Sciatic nerve (tissue), 2 donors: ENCODE measurements at regions of chr20 and their contacts with region 1.

Region 1: GRCh38 chr20:64077876-64078551 is 1.3 kb downstream of the RGS19 start:
- DNase-seq: no peak
- ATAC-seq: no peak

Region 2: DNA sequence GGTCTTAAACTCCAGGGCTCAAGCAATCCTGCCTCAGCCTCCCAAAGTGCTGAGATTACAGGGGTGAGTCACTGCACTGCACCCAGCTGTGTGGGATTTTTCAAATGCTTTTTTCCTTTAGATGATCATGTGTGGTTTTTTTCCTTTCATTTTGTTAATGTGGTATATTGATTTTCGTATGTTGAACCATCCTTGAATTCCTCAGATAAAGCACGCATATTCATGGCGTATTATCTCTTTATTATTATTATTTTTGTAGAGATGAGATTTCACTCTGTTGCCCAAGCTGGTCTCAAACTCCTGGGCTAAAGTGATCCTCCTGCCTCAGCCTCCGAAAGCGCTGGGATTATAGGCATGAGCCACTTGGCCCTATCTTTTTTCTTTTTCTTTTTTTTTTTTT is 363.2 kb before region 1 on chr20:
- intact Hi-C with region 1: no loop called
- DNase-seq: peak; percentile 25
- ATAC-seq: no peak

Region 3: GRCh38 chr20:64047968-64048401 is 30.0 kb before region 1 on chr20:
- intact Hi-C with region 1: loop called (anchors 1 kb)
- DNase-seq: no peak
- ATAC-seq: no peak